Activated CD4-positive, alpha-beta T cell treated with anti-CD3 and anti-CD28 coated beads for 36 hours (primary cell): ENCODE measurements at regions of chr17 and their contacts with region 1.

Region 1: DNA sequence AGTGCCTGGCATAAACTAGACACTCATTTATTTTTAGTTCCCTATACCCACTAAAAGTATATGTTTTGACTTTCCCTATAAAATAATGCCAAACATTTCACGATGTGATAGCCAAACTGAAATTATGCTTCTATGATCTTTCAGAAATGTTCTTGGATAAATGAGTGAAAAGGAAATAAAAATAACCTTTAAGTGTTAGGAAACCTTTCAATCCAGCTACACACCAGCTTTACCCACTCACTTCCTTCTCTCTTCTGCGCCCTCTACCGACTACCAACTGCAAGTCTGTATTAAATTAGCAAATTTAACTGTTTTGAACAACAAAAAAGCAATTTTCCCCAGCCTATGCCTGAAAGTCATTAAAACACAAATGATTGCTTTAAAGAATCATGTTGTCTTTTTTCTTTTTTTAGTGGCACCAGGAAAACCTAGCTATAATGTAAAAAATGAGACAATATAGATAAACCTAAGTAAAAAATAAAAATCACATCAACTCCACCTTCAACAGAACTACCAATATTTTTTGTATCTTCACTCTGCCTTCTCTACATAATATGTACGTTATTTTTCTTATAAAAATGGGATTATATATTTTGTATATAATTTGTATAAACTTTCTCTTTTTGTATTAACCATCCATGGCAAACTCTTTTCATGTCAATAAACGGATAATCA is 13.2 kb upstream of the TMEM100 start:
- DNase-seq: peak; percentile 59
- ATAC-seq: no peak
- H3K4me3 Mint-ChIP-seq: no peak overlapping the region
- H3K27ac Mint-ChIP-seq: no peak overlapping the region
- H3K4me1 Mint-ChIP-seq: peaks cover 28% of the 10 kb centered on the region
- H3K27me3 Mint-ChIP-seq: peaks cover 38% of the 10 kb centered on the region

Region 2: GRCh38 chr17:54968262-54968987 is 767.4 kb before region 1 on chr17 and contains the starts of genes COX11 and STXBP4:
- CTCF ChIA-PET with region 1: no interaction called
- POLR2A ChIA-PET with region 1: no interaction called
- intact Hi-C with region 1: loop called in 1 of 2 experiments (anchors 5 kb)
- DNase-seq: peak; percentile 96
- ATAC-seq: peak; percentile 97
- H3K4me3 Mint-ChIP-seq: no peak within 1 kb of the TSS
- H3K27ac Mint-ChIP-seq: peak within 1 kb of the TSS; percentile 48
- H3K4me1 Mint-ChIP-seq: peaks cover 23% of the 10 kb centered on the region
- H3K27me3 Mint-ChIP-seq: no peaks in the 10 kb centered on the region
- total RNA-seq, gene COX11: 42.6 to 45.4 TPM
- total RNA-seq, gene STXBP4: 5.4 to 7.2 TPM

Region 3: GRCh38 chr17:55458977-55459376 is 276.9 kb before region 1 on chr17:
- CTCF ChIA-PET with region 1: no interaction called
- POLR2A ChIA-PET with region 1: no interaction called
- intact Hi-C with region 1: loop called (anchors 1 kb)
- DNase-seq: peak; percentile 83
- ATAC-seq: peak; percentile 99
- H3K4me3 Mint-ChIP-seq: no peak overlapping the region
- H3K27ac Mint-ChIP-seq: no peak overlapping the region
- H3K4me1 Mint-ChIP-seq: peaks cover 24% of the 10 kb centered on the region
- H3K27me3 Mint-ChIP-seq: peaks cover 14% of the 10 kb centered on the region

Region 4: DNA sequence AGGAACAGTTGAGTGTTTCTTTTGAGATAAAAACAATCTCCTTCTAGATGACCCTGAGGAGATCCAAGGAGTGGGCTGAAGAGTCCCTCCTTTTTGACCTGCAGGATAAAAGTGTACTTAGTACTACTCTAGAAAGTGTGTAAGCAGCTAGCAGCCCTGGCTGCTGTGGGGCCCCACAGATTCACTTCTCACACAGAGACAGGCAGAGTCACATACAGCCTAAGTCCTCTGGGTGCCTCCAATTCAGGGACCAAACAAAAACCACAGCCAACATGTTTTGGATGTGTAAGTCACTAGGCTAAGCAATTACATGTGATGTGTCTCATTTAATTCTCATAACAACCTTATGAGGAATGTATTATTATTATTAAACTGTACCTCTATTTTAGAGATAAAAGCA is 110.3 kb before region 1 on chr17:
- CTCF ChIA-PET with region 1: no interaction called
- POLR2A ChIA-PET with region 1: no interaction called
- intact Hi-C with region 1: loop called (anchors 1 kb)
- DNase-seq: peak; percentile 47
- ATAC-seq: peak; percentile 84
- H3K4me3 Mint-ChIP-seq: no peak overlapping the region
- H3K27ac Mint-ChIP-seq: no peak overlapping the region
- H3K4me1 Mint-ChIP-seq: peaks cover 16% of the 10 kb centered on the region
- H3K27me3 Mint-ChIP-seq: peaks cover 32% of the 10 kb centered on the region

Region 5: GRCh38 chr17:55806745-55807495 is 71.1 kb after region 1 on chr17:
- CTCF ChIA-PET with region 1: no interaction called
- POLR2A ChIA-PET with region 1: no interaction called
- intact Hi-C with region 1: loop called (anchors 1 to 2 kb)
- DNase-seq: peak; percentile 44
- ATAC-seq: peak; percentile 90
- H3K4me3 Mint-ChIP-seq: no peak overlapping the region
- H3K27ac Mint-ChIP-seq: peak overlapping the region; percentile 80
- H3K4me1 Mint-ChIP-seq: peaks cover 13% of the 10 kb centered on the region
- H3K27me3 Mint-ChIP-seq: peaks cover 5% of the 10 kb centered on the region

Region 6: GRCh38 chr17:56108811-56109284 is 373.0 kb after region 1 on chr17:
- CTCF ChIA-PET with region 1: no interaction called
- POLR2A ChIA-PET with region 1: no interaction called
- intact Hi-C with region 1: no loop called
- DNase-seq: no peak
- ATAC-seq: no peak
- H3K4me3 Mint-ChIP-seq: no peak overlapping the region
- H3K27ac Mint-ChIP-seq: no peak overlapping the region
- H3K4me1 Mint-ChIP-seq: no peaks in the 10 kb centered on the region
- H3K27me3 Mint-ChIP-seq: peaks cover 3% of the 10 kb centered on the region

Region 7: DNA sequence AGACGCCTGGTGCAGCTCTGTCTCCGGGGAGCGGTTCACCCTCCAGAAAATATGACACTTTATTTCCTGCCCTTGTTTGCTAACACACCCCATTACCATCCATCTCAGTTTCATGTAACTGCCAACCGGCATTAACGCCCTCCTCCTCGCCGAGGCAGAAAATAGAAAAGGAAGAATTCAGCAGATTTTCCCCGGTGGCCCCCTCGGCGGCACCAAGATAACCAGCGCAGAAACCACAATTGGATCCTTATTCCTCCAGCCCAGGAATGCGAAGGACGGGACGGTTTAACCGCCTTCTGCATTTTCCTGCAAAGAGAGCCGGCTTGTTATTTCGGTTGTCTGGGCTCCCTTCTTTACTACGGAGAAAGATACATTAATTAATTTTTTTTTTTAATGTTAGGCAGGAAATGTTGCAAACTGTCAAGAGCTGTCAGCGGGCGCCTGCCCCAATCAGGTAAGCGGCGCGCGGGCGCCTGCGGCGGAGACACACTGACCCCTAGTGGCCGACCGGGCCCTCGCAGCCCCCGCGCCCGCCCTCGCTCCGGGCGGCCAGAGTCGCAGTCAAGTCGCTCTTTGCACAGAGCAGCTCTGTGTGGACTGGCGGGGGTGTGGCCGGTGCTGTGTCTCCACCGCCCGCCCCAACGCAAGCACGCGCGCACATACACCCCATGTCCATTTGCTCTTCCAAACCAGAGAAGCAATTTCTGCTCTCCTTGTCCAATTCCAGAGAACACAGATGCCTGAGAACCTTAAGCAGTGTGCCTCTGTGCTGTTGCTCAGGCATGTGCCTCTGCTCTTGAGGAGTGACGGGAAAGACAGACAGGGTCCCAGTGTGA is 1044.2 kb after region 1 on chr17:
- CTCF ChIA-PET with region 1: no interaction called
- POLR2A ChIA-PET with region 1: no interaction called
- intact Hi-C with region 1: loop called in 1 of 2 experiments (anchors 10 kb)
- DNase-seq: peak; percentile 93
- ATAC-seq: peak; percentile 95
- H3K4me3 Mint-ChIP-seq: peak overlapping the region; percentile 77
- H3K27ac Mint-ChIP-seq: peak overlapping the region; percentile 91
- H3K4me1 Mint-ChIP-seq: peaks cover 24% of the 10 kb centered on the region
- H3K27me3 Mint-ChIP-seq: peaks cover 1% of the 10 kb centered on the region